ENCODE measurements at regions of chr10 and their contacts with region 1.

Region 1: GRCh38 chr10:120950051-120950561 is 98.9 kb downstream of the WDR11 start:
- DNase-seq: no peak
- ATAC-seq: peak; percentile 11 to 30 (median 26)
- H3K4me3 ChIP-seq: no peak overlapping the region
- H3K27ac ChIP-seq: no peak overlapping the region
- H3K4me1 ChIP-seq: peaks cover 0 to 12% (median 0%) of the 10 kb centered on the region in 4 donors
- H3K27me3 ChIP-seq: peaks cover 0 to 17% of the 10 kb centered on the region in 2 donors
- CTCF ChIP-seq: no peak
- POLR2A ChIP-seq: no peak

Region 2: GRCh38 chr10:120423431-120424197 is 526.5 kb before region 1 on chr10:
- intact Hi-C with region 1: no loop called
- DNase-seq: peak in 2 of 3 donors; percentile 43 to 49
- ATAC-seq: peak; percentile 80 to 86 (median 82)
- H3K4me3 ChIP-seq: no peak overlapping the region
- H3K27ac ChIP-seq: no peak overlapping the region
- H3K4me1 ChIP-seq: no peaks in the 10 kb centered on the region
- H3K27me3 ChIP-seq: no peaks in the 10 kb centered on the region
- CTCF ChIP-seq: peak; percentile 55 to 89 (median 86)
- POLR2A ChIP-seq: no peak

Region 3: GRCh38 chr10:121157998-121158397 is 207.9 kb after region 1 on chr10:
- intact Hi-C with region 1: no loop called
- DNase-seq: no peak
- ATAC-seq: peak in 3 of 4 donors; percentile 31 to 57 (median 44)
- H3K4me3 ChIP-seq: no peak overlapping the region
- H3K27ac ChIP-seq: no peak overlapping the region
- H3K4me1 ChIP-seq: peaks cover 0 to 9% (median 3%) of the 10 kb centered on the region in 4 donors
- H3K27me3 ChIP-seq: no peaks in the 10 kb centered on the region
- CTCF ChIP-seq: no peak
- POLR2A ChIP-seq: no peak

Region 4: DNA sequence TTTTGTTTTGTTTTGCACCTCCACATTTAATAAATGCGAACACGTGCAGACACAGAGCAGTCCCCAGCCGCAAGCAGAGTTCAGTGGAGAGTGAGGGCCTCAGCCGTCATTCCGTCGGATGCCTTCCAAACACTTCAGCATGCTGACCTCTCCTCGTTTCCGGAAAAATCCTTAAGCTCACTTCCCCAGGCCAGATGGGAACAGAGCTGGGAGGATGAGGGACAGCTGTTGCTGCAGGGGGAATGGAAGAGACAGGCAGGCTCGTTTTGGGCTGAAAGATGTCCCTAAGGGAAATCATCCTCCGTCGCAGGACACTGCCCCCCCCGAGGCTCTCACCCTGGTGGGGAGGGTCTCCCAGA is 665.3 kb after region 1 on chr10:
- intact Hi-C with region 1: loop called in 1 of 2 experiments (anchors 10 kb)
- DNase-seq: no peak
- ATAC-seq: peak in 2 of 4 donors; percentile 24 to 34
- H3K4me3 ChIP-seq: no peak overlapping the region
- H3K27ac ChIP-seq: no peak overlapping the region
- H3K4me1 ChIP-seq: no peaks in the 10 kb centered on the region
- H3K27me3 ChIP-seq: no peaks in the 10 kb centered on the region
- CTCF ChIP-seq: no peak
- POLR2A ChIP-seq: no peak